ENCODE measurements at regions of chr2 and their contacts with region 1.

Region 1: GRCh38 chr2:191691016-191691735 is 13.2 kb downstream of the NABP1 start:
- DNase-seq: no peak
- H3K4me3 ChIP-seq: no peak overlapping the region
- H3K27ac ChIP-seq: peak overlapping the region in 7 of 8 donors; percentile 17 to 63 (median 46)
- H3K4me1 ChIP-seq: peaks cover 5 to 57% (median 26%) of the 10 kb centered on the region in 6 donors
- H3K27me3 ChIP-seq: no peaks in the 10 kb centered on the region
- CTCF ChIP-seq: peak; percentile 59 to 92 (median 77)
- POLR2A ChIP-seq: no peak

Region 2: DNA sequence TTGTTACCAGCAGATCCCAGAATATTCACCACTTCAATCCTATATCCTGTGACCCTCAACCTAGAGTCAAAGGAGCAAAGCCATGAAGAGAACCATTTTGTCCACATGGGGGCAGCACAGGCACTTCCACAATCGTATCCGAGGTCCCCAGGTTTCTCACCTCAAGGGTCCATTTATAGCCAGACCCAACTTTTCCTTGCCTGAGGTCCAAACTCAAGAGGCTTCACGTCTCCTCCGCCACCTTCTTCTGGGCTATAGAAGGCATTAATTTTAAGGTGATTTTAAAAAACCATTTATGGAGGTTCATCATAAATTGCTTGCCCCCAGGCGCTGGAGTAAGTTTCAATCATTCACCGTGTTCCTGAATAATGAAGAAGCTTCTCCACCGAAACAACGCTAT is 124.8 kb before region 1 on chr2:
- intact Hi-C with region 1: loop called (anchors 5 kb)
- DNase-seq: no peak
- H3K4me3 ChIP-seq: no peak overlapping the region
- H3K27ac ChIP-seq: no peak overlapping the region
- H3K4me1 ChIP-seq: peaks cover 0 to 38% (median 20%) of the 10 kb centered on the region in 6 donors
- H3K27me3 ChIP-seq: peaks cover 0 to 11% (median 0%) of the 10 kb centered on the region in 7 donors
- CTCF ChIP-seq: peak; percentile 60 to 89 (median 83)
- POLR2A ChIP-seq: no peak